ENCODE measurements at regions of chr11 and their contacts with region 1.

Region 1: DNA sequence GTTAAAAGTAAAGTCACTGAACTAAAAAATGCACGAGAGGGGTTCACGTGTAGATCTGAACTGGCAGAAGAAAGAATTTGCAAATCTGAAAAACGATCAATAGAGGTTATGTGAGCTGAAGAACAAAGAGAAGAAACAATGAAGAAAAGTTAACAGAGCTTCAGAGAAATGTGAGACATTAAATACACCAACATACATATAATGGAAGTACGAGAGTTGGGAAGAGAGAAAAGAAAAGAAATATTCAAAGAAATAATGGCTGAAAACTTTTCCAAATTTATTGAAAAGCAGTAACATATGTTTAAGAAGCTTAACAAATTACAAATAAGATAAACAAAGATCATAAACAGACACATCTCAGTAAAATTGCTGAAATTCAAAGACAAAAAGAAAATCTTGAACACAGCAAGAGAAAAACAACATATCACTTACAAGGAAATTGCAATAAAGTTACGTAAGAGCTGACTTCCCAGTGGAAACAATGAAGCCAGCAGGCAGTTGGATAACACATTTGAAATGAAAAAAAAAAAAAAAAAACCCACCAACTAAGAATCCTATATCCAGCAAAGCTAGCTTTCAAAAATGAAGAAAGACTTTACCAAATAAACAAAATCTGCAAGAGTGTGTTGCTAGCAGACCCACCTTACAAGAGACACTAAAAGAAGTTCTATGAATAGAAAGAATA is 56.9 kb downstream of the EMSY start:
- DNase-seq: no peak
- ATAC-seq: no peak
- H3K4me3 ChIP-seq: no peak overlapping the region
- H3K27ac ChIP-seq: no peak overlapping the region
- H3K4me1 ChIP-seq: no peaks in the 10 kb centered on the region
- H3K27me3 ChIP-seq: no peaks in the 10 kb centered on the region
- CTCF ChIP-seq: no peak
- POLR2A ChIP-seq: no peak
- RAD21 ChIP-seq: no peak

Region 2: DNA sequence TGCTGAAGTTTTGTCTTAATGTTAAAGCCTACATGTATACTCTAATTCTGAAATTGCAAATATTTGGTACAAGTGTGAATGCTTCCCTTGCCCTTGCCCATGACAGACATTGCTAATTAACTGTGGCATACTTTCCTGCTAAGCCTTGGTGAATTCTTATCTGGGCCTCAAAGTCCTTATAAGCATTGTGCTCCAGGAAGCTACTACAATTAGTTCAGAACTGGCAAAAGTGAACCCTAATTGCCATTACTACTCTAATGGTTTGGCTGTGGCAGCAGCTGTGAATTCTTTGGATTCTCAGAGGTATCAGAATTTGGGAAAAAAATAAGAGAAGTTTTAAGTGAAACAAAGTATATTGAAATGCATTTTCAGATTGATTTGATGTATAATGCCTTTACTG is 32.5 kb before region 1 on chr11:
- CTCF ChIA-PET with region 1: no interaction called
- POLR2A ChIA-PET with region 1: no interaction called
- dilution Hi-C with region 1: no loop called
- in situ Hi-C with region 1: no loop called
- intact Hi-C with region 1: loop called (anchors 5 kb)
- DNase-seq: no peak
- ATAC-seq: no peak
- H3K4me3 ChIP-seq: no peak overlapping the region
- H3K27ac ChIP-seq: no peak overlapping the region
- H3K4me1 ChIP-seq: no peaks in the 10 kb centered on the region
- H3K27me3 ChIP-seq: no peaks in the 10 kb centered on the region
- CTCF ChIP-seq: no peak
- POLR2A ChIP-seq: no peak
- RAD21 ChIP-seq: no peak

Region 3: GRCh38 chr11:76626921-76627401 is 125.3 kb after region 1 on chr11:
- CTCF ChIA-PET with region 1: no interaction called
- POLR2A ChIA-PET with region 1: no interaction called
- dilution Hi-C with region 1: no loop called
- in situ Hi-C with region 1: no loop called
- intact Hi-C with region 1: no loop called
- DNase-seq: peak; percentile 29
- ATAC-seq: no peak
- H3K4me3 ChIP-seq: no peak overlapping the region
- H3K27ac ChIP-seq: no peak overlapping the region
- H3K4me1 ChIP-seq: peaks cover 24% of the 10 kb centered on the region
- H3K27me3 ChIP-seq: no peaks in the 10 kb centered on the region
- CTCF ChIP-seq: no peak
- POLR2A ChIP-seq: no peak
- RAD21 ChIP-seq: no peak